ENCODE measurements at regions of chr10 and their contacts with region 1.

Region 1: GRCh38 chr10:58384999-58385783 is at the start of gene TFAM:
- DNase-seq: peak; percentile 88
- ATAC-seq: peak; percentile 97
- H3K4me3 ChIP-seq: peak within 1 kb of the TSS; percentile 78 to 96 (median 90)
- H3K27ac ChIP-seq: peak within 1 kb of the TSS; percentile 82
- H3K4me1 ChIP-seq: peaks cover 38% of the 10 kb centered on the region
- H3K27me3 ChIP-seq: no peaks in the 10 kb centered on the region; a peak in 1 of 5 replicates
- CTCF ChIP-seq: peak; percentile 91
- EP300 ChIP-seq: peak in 1 of 2 experiments; percentile 43; a peak in 1 of 4 replicates
- POLR2A ChIP-seq: peak; percentile 97
- RAD21 ChIP-seq: peak; percentile 91
- total RNA-seq, gene TFAM: 125 and 189 TPM in 2 replicates

Region 2: DNA sequence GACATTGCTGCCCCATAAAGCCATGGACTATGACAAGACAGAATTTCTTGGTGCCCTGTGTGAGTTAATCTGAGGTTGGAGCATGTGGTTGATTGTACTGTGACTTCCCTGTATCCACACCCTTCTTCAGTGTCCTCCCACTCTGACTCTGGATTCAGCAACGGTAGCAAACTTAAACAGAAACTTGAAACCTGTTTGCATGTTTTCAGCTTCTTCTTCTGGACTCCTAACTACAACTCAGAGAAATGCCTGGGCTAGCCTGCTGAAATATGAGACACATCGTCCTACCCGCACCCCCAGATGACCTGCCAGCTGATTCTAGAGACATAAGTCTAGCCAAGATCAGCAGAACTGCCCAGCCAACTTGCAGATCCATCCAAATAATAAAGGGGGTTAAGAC is 195.9 kb before region 1 on chr10:
- CTCF ChIA-PET with region 1: no interaction called
- POLR2A ChIA-PET with region 1: no interaction called
- in situ Hi-C with region 1: loop called (anchors 10 kb)
- intact Hi-C with region 1: no loop called
- DNase-seq: no peak
- ATAC-seq: peak; percentile 41
- H3K4me3 ChIP-seq: no peak overlapping the region
- H3K27ac ChIP-seq: no peak overlapping the region
- H3K4me1 ChIP-seq: no peaks in the 10 kb centered on the region
- H3K27me3 ChIP-seq: no peaks in the 10 kb centered on the region
- CTCF ChIP-seq: no peak
- EP300 ChIP-seq: no peak
- POLR2A ChIP-seq: no peak
- RAD21 ChIP-seq: no peak

Region 3: DNA sequence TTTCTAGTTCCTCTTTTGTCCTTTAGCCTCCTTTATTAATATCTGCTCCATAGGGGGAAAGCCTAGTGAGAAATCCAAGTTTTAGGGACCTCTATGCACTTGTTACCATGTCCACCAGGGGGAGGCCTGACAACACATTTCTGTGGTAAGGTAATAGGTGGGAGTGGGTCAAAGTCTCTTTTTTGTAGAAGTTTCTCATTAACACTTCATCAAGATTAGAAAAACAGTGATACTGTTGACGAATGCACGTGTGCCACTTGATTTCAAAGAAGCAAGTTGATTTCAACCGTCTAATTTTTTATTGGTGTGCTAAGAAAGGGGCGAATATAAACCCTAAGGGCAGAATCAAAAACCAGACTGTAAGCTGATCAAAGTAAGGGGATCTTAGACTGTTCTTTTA is 85.6 kb before region 1 on chr10:
- CTCF ChIA-PET with region 1: interaction called, 34 read pairs
- POLR2A ChIA-PET with region 1: interaction called, 10 read pairs
- in situ Hi-C with region 1: loop called (anchors 5 kb)
- intact Hi-C with region 1: loop called (anchors 1 kb)
- DNase-seq: peak; percentile 71
- ATAC-seq: peak; percentile 99
- H3K4me3 ChIP-seq: peak overlapping the region in 2 of 3 experiments; percentile 13 to 29; a peak in 2 of 6 replicates
- H3K27ac ChIP-seq: no peak overlapping the region
- H3K4me1 ChIP-seq: peaks cover 31% of the 10 kb centered on the region
- H3K27me3 ChIP-seq: no peaks in the 10 kb centered on the region
- CTCF ChIP-seq: peak; percentile 87
- EP300 ChIP-seq: no peak
- POLR2A ChIP-seq: no peak
- RAD21 ChIP-seq: peak; percentile 70

Region 4: GRCh38 chr10:58467931-58468635 is 82.9 kb after region 1 on chr10:
- CTCF ChIA-PET with region 1: no interaction called
- POLR2A ChIA-PET with region 1: interaction called, 13 read pairs
- in situ Hi-C with region 1: no loop called
- intact Hi-C with region 1: no loop called
- DNase-seq: peak; percentile 37
- ATAC-seq: peak; percentile 44
- H3K4me3 ChIP-seq: no peak overlapping the region; a peak in 1 of 6 replicates
- H3K27ac ChIP-seq: peak overlapping the region; percentile 68
- H3K4me1 ChIP-seq: peaks cover 48% of the 10 kb centered on the region
- H3K27me3 ChIP-seq: no peaks in the 10 kb centered on the region
- CTCF ChIP-seq: no peak
- EP300 ChIP-seq: no peak
- POLR2A ChIP-seq: no peak
- RAD21 ChIP-seq: no peak

Measured in HepG2 (cell line).